A673 (cell line): ENCODE measurements at regions of chr1 and their contacts with region 1.

Region 1: GRCh38 chr1:93542398-93542797 is 94.5 kb downstream of the FNBP1L start:
- DNase-seq: no peak
- H3K4me3 ChIP-seq: no peak overlapping the region
- H3K27ac ChIP-seq: no peak overlapping the region
- H3K4me1 ChIP-seq: peaks cover 15% of the 10 kb centered on the region
- H3K27me3 ChIP-seq: no peaks in the 10 kb centered on the region
- CTCF ChIP-seq: no peak

Region 2: GRCh38 chr1:92980732-92981647 is 561.4 kb before region 1 on chr1:
- CTCF ChIA-PET with region 1: no interaction called
- POLR2A ChIA-PET with region 1: no interaction called
- intact Hi-C with region 1: no loop called
- DNase-seq: no peak
- H3K4me3 ChIP-seq: no peak overlapping the region
- H3K27ac ChIP-seq: no peak overlapping the region
- H3K4me1 ChIP-seq: no peaks in the 10 kb centered on the region
- H3K27me3 ChIP-seq: no peaks in the 10 kb centered on the region
- CTCF ChIP-seq: no peak

Region 3: DNA sequence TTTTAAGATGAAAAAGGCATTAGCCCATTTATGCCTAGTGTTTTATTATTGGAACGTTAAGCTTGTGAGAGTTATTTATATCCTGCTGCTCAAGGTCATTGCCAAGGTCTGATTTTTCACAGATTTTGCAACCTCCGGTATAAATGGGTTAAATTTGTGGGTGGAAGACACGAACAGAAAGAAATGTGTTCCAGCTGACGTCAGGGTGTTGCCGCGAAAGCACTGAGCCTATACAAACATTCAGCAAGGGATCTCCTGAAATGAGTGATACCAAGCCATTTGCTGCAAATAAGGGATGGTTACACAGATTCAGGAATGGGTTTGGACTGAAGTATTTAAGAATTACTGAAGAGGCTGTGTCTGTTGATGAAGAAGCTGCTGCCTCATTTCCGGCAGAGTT is 394.4 kb before region 1 on chr1:
- CTCF ChIA-PET with region 1: no interaction called
- POLR2A ChIA-PET with region 1: no interaction called
- intact Hi-C with region 1: no loop called
- DNase-seq: no peak
- H3K4me3 ChIP-seq: no peak overlapping the region
- H3K27ac ChIP-seq: no peak overlapping the region
- H3K4me1 ChIP-seq: no peaks in the 10 kb centered on the region
- H3K27me3 ChIP-seq: no peaks in the 10 kb centered on the region
- CTCF ChIP-seq: no peak

Region 4: GRCh38 chr1:93554883-93555872 is 12.8 kb after region 1 on chr1:
- CTCF ChIA-PET with region 1: interaction called, 10 read pairs
- POLR2A ChIA-PET with region 1: no interaction called
- intact Hi-C with region 1: no loop called
- DNase-seq: no peak
- H3K4me3 ChIP-seq: no peak overlapping the region
- H3K27ac ChIP-seq: no peak overlapping the region
- H3K4me1 ChIP-seq: peaks cover 3% of the 10 kb centered on the region
- H3K27me3 ChIP-seq: no peaks in the 10 kb centered on the region
- CTCF ChIP-seq: no peak